Breast epithelium (tissue), 4 donors: ENCODE measurements at regions of chr5 and their contacts with region 1.

Region 1: DNA sequence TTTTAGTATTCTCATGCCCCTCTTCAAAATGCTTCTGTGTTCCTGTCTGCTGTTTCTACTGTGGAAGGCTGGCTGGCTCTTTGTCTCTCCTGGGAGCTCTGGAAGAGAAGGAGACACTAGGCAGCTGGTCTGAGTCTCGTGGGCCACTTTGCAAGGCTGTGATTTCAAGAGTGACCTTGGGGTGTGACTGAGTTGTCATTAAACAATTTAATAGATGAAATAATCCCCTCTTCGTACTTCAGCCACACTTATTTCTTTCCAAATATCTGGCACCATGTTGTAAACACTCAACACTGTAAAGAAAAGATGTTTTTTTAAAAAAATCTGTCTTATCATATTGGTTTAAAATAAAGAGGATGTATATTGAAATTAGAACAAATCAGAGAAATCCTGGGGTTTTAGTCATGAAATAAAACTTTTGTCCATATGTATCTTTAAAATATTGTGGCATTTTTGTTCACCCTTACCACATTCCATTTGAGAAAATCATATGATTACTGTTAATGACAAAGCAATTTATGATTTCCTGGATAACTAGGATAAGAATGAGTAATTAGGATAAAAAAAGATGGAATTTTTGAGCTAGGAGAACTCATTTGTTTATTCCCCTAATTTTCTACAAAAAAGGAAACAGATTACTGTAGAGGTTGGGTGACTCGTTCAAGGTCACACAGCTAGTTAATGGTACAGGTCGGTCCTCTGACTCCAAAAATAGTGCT is 200.8 kb downstream of the MAT2B start:
- DNase-seq: no peak
- H3K4me3 ChIP-seq: no peak overlapping the region
- H3K27ac ChIP-seq: no peak overlapping the region
- H3K4me1 ChIP-seq: no peaks in the 10 kb centered on the region
- H3K27me3 ChIP-seq: no peaks in the 10 kb centered on the region
- CTCF ChIP-seq: no peak
- POLR2A ChIP-seq: no peak

Region 2: GRCh38 chr5:161857316-161857715 is 1848.9 kb before region 1 on chr5:
- intact Hi-C with region 1: no loop called
- DNase-seq: no peak
- H3K4me3 ChIP-seq: no peak overlapping the region
- H3K27ac ChIP-seq: no peak overlapping the region
- H3K4me1 ChIP-seq: no peaks in the 10 kb centered on the region
- H3K27me3 ChIP-seq: no peaks in the 10 kb centered on the region
- CTCF ChIP-seq: no peak
- POLR2A ChIP-seq: no peak

Region 3: DNA sequence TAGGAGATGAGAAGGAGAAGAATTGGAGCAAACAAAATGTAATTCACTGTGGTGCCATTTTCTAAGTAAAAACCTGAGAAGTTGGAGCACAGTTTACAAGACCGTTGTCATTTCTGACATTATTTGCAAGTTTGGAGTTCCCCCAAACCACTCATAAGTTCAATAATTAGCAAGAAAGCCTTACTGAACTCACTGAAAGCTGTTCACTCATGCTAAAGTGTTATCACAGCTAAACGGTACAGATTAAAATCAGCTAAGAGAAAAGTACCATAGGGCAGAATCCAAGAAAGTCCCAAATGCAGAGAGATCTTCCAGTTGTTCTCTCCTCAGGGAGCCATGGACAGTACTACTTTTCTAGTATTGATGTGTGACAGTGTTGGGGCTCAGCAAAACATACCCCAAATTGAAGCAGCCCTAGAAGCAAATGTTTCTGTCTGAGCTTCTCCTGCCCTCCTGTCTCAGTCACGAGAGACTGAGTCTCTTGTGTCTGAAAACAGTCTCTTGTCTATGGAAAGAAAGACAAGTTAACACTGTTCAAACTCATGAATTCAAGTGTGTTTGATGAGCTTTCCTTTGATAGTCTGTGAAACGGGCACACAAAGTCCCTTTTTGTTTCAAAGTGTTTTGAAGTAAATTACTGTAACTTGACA is 1417.4 kb before region 1 on chr5:
- intact Hi-C with region 1: loop called (anchors 10 kb)
- DNase-seq: no peak
- H3K4me3 ChIP-seq: no peak overlapping the region
- H3K27ac ChIP-seq: no peak overlapping the region
- H3K4me1 ChIP-seq: no peaks in the 10 kb centered on the region
- H3K27me3 ChIP-seq: no peaks in the 10 kb centered on the region
- CTCF ChIP-seq: no peak
- POLR2A ChIP-seq: no peak

Region 4: DNA sequence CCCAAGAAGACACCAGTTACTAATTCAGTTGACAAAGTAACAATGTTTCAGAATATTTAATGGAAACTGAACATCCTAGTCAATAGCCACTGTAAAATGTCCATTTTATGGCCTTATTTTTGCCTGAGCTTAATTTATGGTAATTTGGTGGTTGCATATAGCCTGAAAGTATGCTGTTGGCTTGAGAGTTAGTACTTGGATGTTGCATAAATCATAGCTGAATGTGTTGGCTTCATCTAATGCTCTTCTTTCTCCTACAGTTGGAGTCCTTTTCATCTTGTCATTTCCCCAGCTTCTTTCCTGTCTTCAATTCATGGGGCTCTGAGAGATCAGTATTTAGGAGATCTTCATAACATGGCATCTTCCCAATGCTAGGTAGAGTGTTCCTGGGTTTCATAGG is 36.2 kb before region 1 on chr5:
- intact Hi-C with region 1: no loop called
- DNase-seq: no peak
- H3K4me3 ChIP-seq: no peak overlapping the region
- H3K27ac ChIP-seq: no peak overlapping the region
- H3K4me1 ChIP-seq: no peaks in the 10 kb centered on the region
- H3K27me3 ChIP-seq: no peaks in the 10 kb centered on the region
- CTCF ChIP-seq: no peak
- POLR2A ChIP-seq: no peak